Right ventricle myocardium inferior (tissue), 1 donor: ENCODE measurements at regions of chr2 and their contacts with region 1.

Region 1: DNA sequence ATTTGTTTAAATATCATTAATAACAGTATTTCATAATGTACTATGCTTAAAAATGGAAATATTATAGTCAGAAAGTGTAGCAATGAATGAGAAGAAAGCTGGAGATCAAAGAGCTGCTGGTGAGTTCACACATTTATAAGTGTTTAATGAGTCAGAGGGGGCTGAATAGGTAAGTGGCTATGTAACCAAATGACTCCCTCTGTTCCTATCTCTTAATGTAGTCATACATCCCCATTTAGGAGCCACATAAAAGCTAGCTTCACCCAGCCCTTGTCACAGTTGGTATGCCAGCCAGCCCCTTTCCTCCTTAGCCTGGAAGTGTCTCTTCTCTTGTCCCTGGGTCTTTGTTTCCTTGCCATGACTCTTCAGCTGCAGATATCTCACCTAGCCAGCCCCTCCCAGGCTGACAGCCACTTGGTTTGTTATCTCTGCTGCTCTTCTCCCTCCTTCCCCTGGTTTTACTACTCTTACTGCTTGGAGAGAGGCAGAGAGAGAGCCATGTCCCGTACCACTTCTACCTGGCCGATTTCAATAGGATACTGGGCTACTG is 438.6 kb upstream of the HNMT start:
- DNase-seq: no peak
- ATAC-seq: no peak

Region 2: DNA sequence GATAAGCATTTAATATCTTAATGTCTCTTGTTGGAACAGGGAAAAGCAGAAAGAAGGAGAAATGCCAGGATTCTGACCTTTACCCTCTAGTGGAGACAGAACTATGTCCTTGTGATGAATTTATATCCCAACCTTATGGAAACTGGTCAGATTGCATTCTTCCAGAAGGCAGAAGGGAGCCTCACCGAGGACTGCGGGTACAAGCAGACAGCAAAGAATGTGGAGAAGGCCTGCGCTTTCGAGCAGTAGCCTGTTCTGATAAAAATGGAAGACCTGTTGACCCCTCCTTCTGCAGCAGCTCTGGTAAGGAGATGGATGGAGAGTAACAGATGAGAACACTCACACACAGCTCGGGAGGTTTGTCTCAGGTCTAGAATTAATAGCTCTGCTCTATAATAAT is 114.1 kb before region 1 on chr2:
- intact Hi-C with region 1: no loop called
- DNase-seq: no peak
- ATAC-seq: no peak

Region 3: DNA sequence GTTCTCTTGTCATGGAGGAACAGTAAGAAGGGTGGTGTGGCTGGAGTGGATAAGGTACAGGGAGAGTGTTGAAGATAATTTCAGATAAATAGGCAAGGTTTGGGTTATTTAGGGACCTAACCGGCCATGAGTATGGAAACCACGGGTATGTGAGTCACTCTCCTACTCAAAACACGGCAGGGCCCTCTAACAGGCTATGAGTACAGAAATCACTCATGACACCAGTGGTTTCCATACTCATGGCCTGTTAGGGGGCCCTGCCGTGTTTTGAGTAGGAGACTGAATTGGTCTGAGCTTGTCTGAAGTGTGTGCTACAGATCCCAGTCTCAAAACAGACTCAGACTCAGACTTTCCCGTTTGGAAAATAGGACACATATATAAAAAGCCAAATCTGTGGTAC is 10.2 kb after region 1 on chr2:
- intact Hi-C with region 1: loop called (anchors 1 kb)
- DNase-seq: no peak
- ATAC-seq: no peak